ENCODE measurements at regions of chr6 and their contacts with region 1.

Region 1: DNA sequence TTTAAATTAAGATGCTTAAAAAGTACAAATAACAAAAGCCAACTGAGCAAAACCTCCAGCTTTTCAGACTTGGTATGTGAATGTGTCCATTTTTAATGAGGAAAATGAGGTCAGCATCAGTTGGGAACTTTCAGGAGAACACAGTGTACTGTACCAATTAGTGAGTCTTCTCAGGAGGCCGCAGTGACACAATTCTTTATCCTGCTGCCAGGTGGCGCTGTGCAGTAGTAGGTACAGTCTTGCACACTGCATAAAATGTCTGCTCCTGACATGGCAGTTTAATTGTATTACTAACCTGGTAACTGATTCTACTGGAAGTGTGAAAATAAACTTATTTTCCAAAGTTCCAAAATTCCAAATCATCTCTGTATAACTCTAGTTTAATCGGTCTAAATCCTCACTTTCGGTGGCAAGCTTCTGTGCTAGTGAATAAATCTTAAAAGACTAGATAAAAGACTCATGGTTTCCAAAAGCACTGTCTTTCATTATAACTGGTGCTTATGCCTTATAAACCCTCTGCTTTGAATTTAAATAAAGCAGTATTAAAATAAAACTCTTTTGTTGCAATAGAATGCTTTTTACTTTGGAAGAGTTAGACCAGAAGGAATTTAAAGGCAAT is 214.8 kb upstream of the MMS22L start:
- DNase-seq: peak; percentile 51 to 63
- H3K4me3 ChIP-seq: no peak overlapping the region
- H3K4me3 Mint-ChIP-seq: no peak overlapping the region
- H3K27ac Mint-ChIP-seq: no peak overlapping the region
- H3K4me1 ChIP-seq: no peaks in the 10 kb centered on the region
- H3K4me1 Mint-ChIP-seq: no peaks in the 10 kb centered on the region
- H3K27me3 ChIP-seq: no peaks in the 10 kb centered on the region
- H3K27me3 Mint-ChIP-seq: peaks cover 2% of the 10 kb centered on the region
- CTCF ChIP-seq: peak; percentile 71 to 85

Region 2: DNA sequence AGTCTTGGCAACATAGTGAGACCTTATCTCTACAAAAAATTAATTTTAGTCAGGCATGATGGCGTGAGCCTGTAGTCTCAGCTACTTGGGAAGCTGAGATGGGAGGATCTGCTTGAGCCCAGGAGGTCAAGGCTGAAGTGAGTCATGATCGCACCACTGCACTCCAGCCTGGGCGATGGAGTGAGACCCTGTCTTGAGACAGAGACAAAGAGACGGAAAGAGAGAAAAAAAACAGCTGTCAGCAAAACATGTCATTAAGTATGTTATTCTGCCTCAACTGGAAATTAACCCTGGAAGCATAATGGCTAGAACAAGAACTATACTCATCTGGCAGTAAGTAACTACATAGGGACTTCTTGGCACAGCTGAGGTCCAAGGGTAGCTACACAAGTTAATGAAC is 222.0 kb before region 1 on chr6:
- CTCF ChIA-PET with region 1: no interaction called
- POLR2A ChIA-PET with region 1: no interaction called
- intact Hi-C with region 1: no loop called
- DNase-seq: no peak
- H3K4me3 ChIP-seq: no peak overlapping the region
- H3K4me3 Mint-ChIP-seq: no peak overlapping the region
- H3K27ac Mint-ChIP-seq: no peak overlapping the region
- H3K4me1 ChIP-seq: no peaks in the 10 kb centered on the region
- H3K4me1 Mint-ChIP-seq: no peaks in the 10 kb centered on the region
- H3K27me3 ChIP-seq: no peaks in the 10 kb centered on the region
- H3K27me3 Mint-ChIP-seq: no peaks in the 10 kb centered on the region
- CTCF ChIP-seq: no peak

Region 3: GRCh38 chr6:97654674-97655073 is 156.9 kb after region 1 on chr6:
- CTCF ChIA-PET with region 1: no interaction called
- POLR2A ChIA-PET with region 1: no interaction called
- intact Hi-C with region 1: loop called (anchors 1 kb)
- DNase-seq: no peak
- H3K4me3 ChIP-seq: no peak overlapping the region
- H3K4me3 Mint-ChIP-seq: no peak overlapping the region
- H3K27ac Mint-ChIP-seq: no peak overlapping the region
- H3K4me1 ChIP-seq: no peaks in the 10 kb centered on the region
- H3K4me1 Mint-ChIP-seq: no peaks in the 10 kb centered on the region
- H3K27me3 ChIP-seq: no peaks in the 10 kb centered on the region
- H3K27me3 Mint-ChIP-seq: no peaks in the 10 kb centered on the region
- CTCF ChIP-seq: no peak

Region 4: DNA sequence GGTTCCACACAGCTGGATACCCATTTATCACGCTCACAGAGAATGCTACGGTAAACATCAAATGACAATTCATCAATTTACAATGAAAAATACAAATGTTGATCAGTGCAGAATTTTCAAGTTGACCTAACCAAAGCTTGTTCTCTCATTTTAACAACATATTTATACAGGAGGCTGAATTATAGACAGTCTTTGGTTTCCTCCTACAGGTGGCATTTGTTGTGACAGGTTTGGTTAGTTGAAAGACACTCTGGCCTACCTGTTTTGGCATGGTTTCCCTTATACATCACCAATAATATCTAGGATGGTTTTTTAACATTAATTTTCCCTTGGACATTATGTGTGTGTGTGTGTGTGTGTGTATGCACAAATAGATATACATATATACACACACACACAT is 427.7 kb after region 1 on chr6:
- CTCF ChIA-PET with region 1: no interaction called
- POLR2A ChIA-PET with region 1: no interaction called
- intact Hi-C with region 1: loop called (anchors 1 kb)
- DNase-seq: no peak
- H3K4me3 ChIP-seq: no peak overlapping the region
- H3K4me3 Mint-ChIP-seq: no peak overlapping the region
- H3K27ac Mint-ChIP-seq: no peak overlapping the region
- H3K4me1 ChIP-seq: no peaks in the 10 kb centered on the region
- H3K4me1 Mint-ChIP-seq: no peaks in the 10 kb centered on the region
- H3K27me3 ChIP-seq: no peaks in the 10 kb centered on the region
- H3K27me3 Mint-ChIP-seq: no peaks in the 10 kb centered on the region
- CTCF ChIP-seq: peak; percentile 9 to 25

Region 5: DNA sequence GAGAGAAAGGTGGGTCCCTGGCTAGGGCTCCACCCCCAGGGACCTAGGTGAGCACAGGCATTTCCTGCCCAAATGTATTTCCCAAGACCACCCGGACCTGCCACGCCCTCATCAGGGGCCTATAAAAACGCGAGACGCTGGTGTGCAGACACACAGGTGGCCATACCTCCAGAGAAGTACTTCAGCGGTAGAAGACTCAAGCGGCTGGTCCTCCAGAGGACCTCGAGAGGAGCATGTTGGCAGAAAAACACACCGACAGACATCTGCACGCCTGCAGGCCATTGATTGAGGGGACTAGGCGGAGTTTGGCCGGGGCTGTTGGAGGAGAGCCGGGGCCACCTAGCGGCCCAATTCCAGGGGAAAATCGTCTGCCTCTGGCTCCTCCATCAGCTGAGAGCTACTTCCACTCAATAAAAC is 481.0 kb after region 1 on chr6:
- CTCF ChIA-PET with region 1: no interaction called
- POLR2A ChIA-PET with region 1: no interaction called
- intact Hi-C with region 1: loop called (anchors 5 kb)
- DNase-seq: peak; percentile 60 to 62
- H3K4me3 ChIP-seq: no peak overlapping the region
- H3K4me3 Mint-ChIP-seq: peak overlapping the region; percentile 52
- H3K27ac Mint-ChIP-seq: no peak overlapping the region
- H3K4me1 ChIP-seq: no peaks in the 10 kb centered on the region
- H3K4me1 Mint-ChIP-seq: no peaks in the 10 kb centered on the region
- H3K27me3 ChIP-seq: no peaks in the 10 kb centered on the region
- H3K27me3 Mint-ChIP-seq: peaks cover 2% of the 10 kb centered on the region
- CTCF ChIP-seq: peak; percentile 42 to 58

Region 6: DNA sequence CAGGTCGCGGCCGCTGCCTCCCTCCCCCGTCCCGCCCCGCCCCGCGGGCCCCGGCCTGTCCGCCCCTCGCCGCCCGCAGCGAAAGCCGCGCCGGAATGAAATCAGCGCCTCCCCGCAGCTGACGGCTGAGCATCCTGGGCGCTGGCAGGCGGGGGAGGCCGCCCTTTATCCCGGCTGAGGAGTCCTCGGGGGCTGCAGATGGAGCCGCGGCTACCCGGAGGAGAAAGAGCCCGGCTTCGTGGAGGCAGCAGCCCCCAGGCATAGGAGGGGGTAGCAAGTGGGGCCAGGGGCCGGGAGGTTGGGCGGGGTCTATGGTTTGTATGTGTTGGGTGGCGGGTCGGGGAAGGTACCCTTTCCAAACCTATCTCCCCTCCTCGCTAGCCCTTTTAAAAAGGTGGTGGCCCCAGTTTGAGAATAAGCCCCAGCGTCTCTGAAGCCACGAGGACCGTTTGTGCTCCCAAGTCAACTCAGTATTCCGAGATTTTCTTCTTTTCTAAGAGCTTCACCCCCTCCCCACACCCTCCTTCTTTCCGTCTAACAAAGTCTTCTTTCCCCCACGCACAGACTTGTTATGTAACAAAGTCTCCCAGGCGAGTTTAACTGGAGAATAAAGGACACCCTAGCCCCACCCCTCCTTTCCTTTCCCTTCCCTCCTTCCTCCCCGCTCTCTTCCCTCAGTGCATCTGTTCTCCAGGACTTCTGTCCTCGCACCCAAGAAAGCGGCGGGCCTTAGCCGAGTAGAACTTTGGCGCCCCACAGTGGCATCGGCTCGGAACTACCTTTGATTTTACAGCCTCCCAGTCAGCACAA is 1347.6 kb after region 1 on chr6:
- CTCF ChIA-PET with region 1: no interaction called
- POLR2A ChIA-PET with region 1: no interaction called
- intact Hi-C with region 1: loop called (anchors 1 kb)
- DNase-seq: peak; percentile 66 to 79
- H3K4me3 ChIP-seq: no peak overlapping the region
- H3K4me3 Mint-ChIP-seq: peak overlapping the region; percentile 56
- H3K27ac Mint-ChIP-seq: no peak overlapping the region
- H3K4me1 ChIP-seq: 0 out of 2 replicates have a peak, but pooled peaks cover 4% of the 10 kb centered on the region
- H3K4me1 Mint-ChIP-seq: no peaks in the 10 kb centered on the region
- H3K27me3 ChIP-seq: no peaks in the 10 kb centered on the region; the same call in 1 of the 2 replicates
- H3K27me3 Mint-ChIP-seq: peaks cover 34% of the 10 kb centered on the region
- CTCF ChIP-seq: peak; percentile 85 to 88

Measured in Caco-2 (cell line).